ENCODE measurements at regions of chr3 and their contacts with region 1.

Region 1: GRCh38 chr3:176430244-176431037 is 766.8 kb downstream of the TBL1XR1 start:
- DNase-seq: no peak
- ATAC-seq: 0 out of 3 replicates have a peak, but pooled peaks have one; percentile 48
- H3K4me3 ChIP-seq: no peak overlapping the region
- H3K27ac ChIP-seq: no peak overlapping the region
- H3K4me1 ChIP-seq: no peaks in the 10 kb centered on the region
- H3K27me3 ChIP-seq: no peaks in the 10 kb centered on the region
- CTCF ChIP-seq: peak; percentile 29 to 49 (median 31); a peak in 4 of 6 replicates
- EP300 ChIP-seq: no peak
- POLR2A ChIP-seq: no peak
- RAD21 ChIP-seq: peak; percentile 65

Region 2: DNA sequence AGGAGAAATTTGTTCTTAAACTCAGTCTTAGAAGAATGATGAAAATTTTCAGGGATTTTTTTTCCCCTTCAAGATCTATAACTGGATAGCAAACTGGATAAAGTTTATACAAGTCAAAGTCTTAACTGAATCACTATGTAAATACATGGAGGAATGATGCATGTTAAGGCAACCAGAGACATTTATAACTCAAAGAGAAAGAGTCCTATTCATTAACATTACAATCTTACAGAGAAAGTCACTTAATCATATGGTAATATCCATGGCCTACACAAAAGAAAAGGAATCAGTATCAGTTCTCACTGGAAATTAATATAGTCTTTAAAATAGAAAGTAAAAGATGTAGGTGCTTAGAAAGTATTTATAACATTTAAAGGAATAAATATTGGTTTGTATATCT is 102.2 kb before region 1 on chr3:
- CTCF ChIA-PET with region 1: no interaction called
- POLR2A ChIA-PET with region 1: no interaction called
- RAD21 ChIA-PET with region 1: no interaction called
- SMC1A ChIA-PET with region 1: no interaction called
- in situ Hi-C with region 1: no loop called
- intact Hi-C with region 1: no loop called
- DNase-seq: no peak
- ATAC-seq: no peak
- H3K4me3 ChIP-seq: no peak overlapping the region
- H3K27ac ChIP-seq: no peak overlapping the region
- H3K4me1 ChIP-seq: no peaks in the 10 kb centered on the region
- H3K27me3 ChIP-seq: no peaks in the 10 kb centered on the region
- CTCF ChIP-seq: no peak
- EP300 ChIP-seq: no peak
- POLR2A ChIP-seq: no peak
- RAD21 ChIP-seq: no peak

Region 3: GRCh38 chr3:176416870-176417269 is 13.6 kb before region 1 on chr3:
- CTCF ChIA-PET with region 1: interaction called, 16 read pairs
- POLR2A ChIA-PET with region 1: no interaction called
- RAD21 ChIA-PET with region 1: no interaction called
- SMC1A ChIA-PET with region 1: no interaction called
- in situ Hi-C with region 1: no loop called
- intact Hi-C with region 1: no loop called
- DNase-seq: no peak
- ATAC-seq: no peak
- H3K4me3 ChIP-seq: no peak overlapping the region
- H3K27ac ChIP-seq: no peak overlapping the region
- H3K4me1 ChIP-seq: no peaks in the 10 kb centered on the region
- H3K27me3 ChIP-seq: no peaks in the 10 kb centered on the region
- CTCF ChIP-seq: no peak
- EP300 ChIP-seq: no peak
- POLR2A ChIP-seq: no peak
- RAD21 ChIP-seq: no peak

Region 4: DNA sequence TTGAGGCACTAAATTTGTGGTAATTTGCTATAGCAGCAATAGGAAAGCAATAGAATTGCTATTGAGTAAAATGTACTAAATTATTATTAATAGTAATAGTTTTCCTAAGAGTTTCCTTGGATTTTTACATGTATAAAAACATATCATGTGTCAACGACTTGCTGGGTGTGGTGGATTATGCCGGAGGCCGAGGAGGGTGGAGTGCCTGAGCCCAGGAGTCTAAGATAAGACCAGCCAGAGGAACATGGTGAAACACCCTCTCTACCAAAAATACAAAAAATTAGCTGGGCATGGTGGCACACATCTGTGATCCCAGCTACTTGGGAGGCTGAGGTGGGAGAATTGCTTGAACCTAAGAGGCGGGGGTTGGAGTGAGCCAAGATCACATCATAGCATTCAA is 16.9 kb after region 1 on chr3:
- CTCF ChIA-PET with region 1: no interaction called
- POLR2A ChIA-PET with region 1: no interaction called
- RAD21 ChIA-PET with region 1: no interaction called
- SMC1A ChIA-PET with region 1: no interaction called
- in situ Hi-C with region 1: no loop called
- intact Hi-C with region 1: no loop called
- DNase-seq: no peak
- ATAC-seq: no peak
- H3K4me3 ChIP-seq: no peak overlapping the region
- H3K27ac ChIP-seq: no peak overlapping the region
- H3K4me1 ChIP-seq: no peaks in the 10 kb centered on the region
- H3K27me3 ChIP-seq: no peaks in the 10 kb centered on the region
- CTCF ChIP-seq: no peak
- EP300 ChIP-seq: no peak
- POLR2A ChIP-seq: no peak
- RAD21 ChIP-seq: no peak

Measured in GM12878 (cell line).